ENCODE measurements at regions of chr3 and their contacts with region 1.

Region 1: DNA sequence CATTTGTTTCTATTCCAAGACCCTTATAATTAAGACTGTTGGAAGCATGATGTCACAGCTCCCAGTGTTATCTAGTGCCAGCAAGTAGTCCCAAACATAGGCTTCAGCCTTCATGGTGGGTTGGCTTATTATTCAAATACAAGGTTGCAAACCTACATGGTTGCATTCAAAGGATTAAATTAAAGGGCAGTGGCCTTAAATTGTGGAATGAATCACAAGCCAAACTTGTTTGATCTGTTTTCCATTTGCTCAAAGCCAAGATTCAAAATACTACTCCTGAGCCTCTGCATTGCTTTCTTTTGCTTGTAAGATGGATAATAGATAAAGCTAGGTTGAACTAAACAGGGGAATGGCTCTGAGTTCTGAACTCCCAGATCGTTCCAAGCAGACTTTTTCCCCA is 52.4 kb upstream of the GNB4 start:
- DNase-seq: no peak
- H3K4me3 ChIP-seq: no peak overlapping the region
- H3K4me3 Mint-ChIP-seq: no peak overlapping the region
- H3K27ac Mint-ChIP-seq: no peak overlapping the region
- H3K4me1 ChIP-seq: peaks cover 21% of the 10 kb centered on the region
- H3K4me1 Mint-ChIP-seq: peaks cover 12% of the 10 kb centered on the region
- H3K27me3 ChIP-seq: peaks cover 1% of the 10 kb centered on the region; the same call in 1 of the 2 replicates
- H3K27me3 Mint-ChIP-seq: peaks cover 28% of the 10 kb centered on the region
- CTCF ChIP-seq: no peak

Region 2: GRCh38 chr3:177551431-177551836 is 1952.2 kb before region 1 on chr3:
- CTCF ChIA-PET with region 1: no interaction called
- POLR2A ChIA-PET with region 1: no interaction called
- intact Hi-C with region 1: no loop called
- DNase-seq: peak in 1 of 2 experiments; percentile 3
- H3K4me3 ChIP-seq: no peak overlapping the region
- H3K4me3 Mint-ChIP-seq: no peak overlapping the region
- H3K27ac Mint-ChIP-seq: no peak overlapping the region
- H3K4me1 ChIP-seq: no peaks in the 10 kb centered on the region
- H3K4me1 Mint-ChIP-seq: no peaks in the 10 kb centered on the region
- H3K27me3 ChIP-seq: no peaks in the 10 kb centered on the region
- H3K27me3 Mint-ChIP-seq: no peaks in the 10 kb centered on the region
- CTCF ChIP-seq: no peak

Region 3: GRCh38 chr3:179438841-179439240 is 64.8 kb before region 1 on chr3:
- CTCF ChIA-PET with region 1: no interaction called
- POLR2A ChIA-PET with region 1: no interaction called
- intact Hi-C with region 1: loop called (anchors 2 kb)
- DNase-seq: no peak
- H3K4me3 ChIP-seq: no peak overlapping the region
- H3K4me3 Mint-ChIP-seq: no peak overlapping the region
- H3K27ac Mint-ChIP-seq: no peak overlapping the region
- H3K4me1 ChIP-seq: no peaks in the 10 kb centered on the region
- H3K4me1 Mint-ChIP-seq: peaks cover 9% of the 10 kb centered on the region
- H3K27me3 ChIP-seq: no peaks in the 10 kb centered on the region
- H3K27me3 Mint-ChIP-seq: no peaks in the 10 kb centered on the region
- CTCF ChIP-seq: no peak

Region 4: GRCh38 chr3:179451265-179452175 is 52.1 kb before region 1 on chr3 and contains the start of gene GNB4:
- CTCF ChIA-PET with region 1: no interaction called
- POLR2A ChIA-PET with region 1: no interaction called
- intact Hi-C with region 1: loop called (anchors 2 kb)
- DNase-seq: peak; percentile 63 to 75
- H3K4me3 ChIP-seq: peak within 1 kb of the TSS; percentile 45
- H3K4me3 Mint-ChIP-seq: peak within 1 kb of the TSS; percentile 79
- H3K27ac Mint-ChIP-seq: peak within 1 kb of the TSS; percentile 71
- H3K4me1 ChIP-seq: no peaks in the 10 kb centered on the region
- H3K4me1 Mint-ChIP-seq: peaks cover 10% of the 10 kb centered on the region
- H3K27me3 ChIP-seq: no peaks in the 10 kb centered on the region; the same call in 1 of the 2 replicates
- H3K27me3 Mint-ChIP-seq: peaks cover 9% of the 10 kb centered on the region
- CTCF ChIP-seq: no peak
- total RNA-seq, gene GNB4: 3.6 and 5.1 TPM in 2 replicates

Region 5: GRCh38 chr3:179473565-179473964 is 30.1 kb before region 1 on chr3:
- CTCF ChIA-PET with region 1: no interaction called
- POLR2A ChIA-PET with region 1: no interaction called
- intact Hi-C with region 1: no loop called
- DNase-seq: no peak
- H3K4me3 ChIP-seq: no peak overlapping the region
- H3K4me3 Mint-ChIP-seq: no peak overlapping the region
- H3K27ac Mint-ChIP-seq: no peak overlapping the region
- H3K4me1 ChIP-seq: no peaks in the 10 kb centered on the region
- H3K4me1 Mint-ChIP-seq: no peaks in the 10 kb centered on the region
- H3K27me3 ChIP-seq: no peaks in the 10 kb centered on the region
- H3K27me3 Mint-ChIP-seq: no peaks in the 10 kb centered on the region
- CTCF ChIP-seq: no peak

Region 6: GRCh38 chr3:179546814-179547635 is 43.4 kb after region 1 on chr3:
- CTCF ChIA-PET with region 1: interaction called, 3 read pairs
- POLR2A ChIA-PET with region 1: no interaction called
- intact Hi-C with region 1: loop called (anchors 1 kb)
- DNase-seq: peak; percentile 81 to 89
- H3K4me3 ChIP-seq: no peak overlapping the region
- H3K4me3 Mint-ChIP-seq: peak overlapping the region; percentile 14
- H3K27ac Mint-ChIP-seq: peak overlapping the region; percentile 84
- H3K4me1 ChIP-seq: peaks cover 33% of the 10 kb centered on the region
- H3K4me1 Mint-ChIP-seq: peaks cover 36% of the 10 kb centered on the region
- H3K27me3 ChIP-seq: no peaks in the 10 kb centered on the region
- H3K27me3 Mint-ChIP-seq: no peaks in the 10 kb centered on the region
- CTCF ChIP-seq: no peak